Natural killer cell (primary cell): ENCODE measurements at regions of chr22 and their contacts with region 1.

Region 1: GRCh38 chr22:48098243-48098920 is 1335.9 kb downstream of the TBC1D22A start:
- DNase-seq: peak in 1 of 2 donors; percentile 78
- ATAC-seq: peak; percentile 90 to 96 (median 92)
- H3K4me3 ChIP-seq: peak overlapping the region; percentile 6
- H3K4me3 Mint-ChIP-seq: peak overlapping the region; percentile 87
- H3K27ac ChIP-seq: peak overlapping the region; percentile 87
- H3K27ac Mint-ChIP-seq: peak overlapping the region; percentile 91
- H3K4me1 ChIP-seq: peaks cover 47% of the 10 kb centered on the region
- H3K4me1 Mint-ChIP-seq: peaks cover 46 to 68% of the 10 kb centered on the region in 2 donors
- H3K27me3 ChIP-seq: no peaks in the 10 kb centered on the region
- H3K27me3 Mint-ChIP-seq: peaks cover 6 to 9% of the 10 kb centered on the region in 2 donors
- CTCF ChIP-seq: no peak

Region 2: GRCh38 chr22:48045369-48045768 is 53.0 kb before region 1 on chr22:
- intact Hi-C with region 1: no loop called
- DNase-seq: no peak
- ATAC-seq: peak in 1 of 3 donors; percentile 66
- H3K4me3 ChIP-seq: no peak overlapping the region
- H3K4me3 Mint-ChIP-seq: no peak overlapping the region
- H3K27ac ChIP-seq: no peak overlapping the region
- H3K27ac Mint-ChIP-seq: no peak overlapping the region
- H3K4me1 ChIP-seq: peaks cover 17% of the 10 kb centered on the region
- H3K4me1 Mint-ChIP-seq: peaks cover 0 to 10% of the 10 kb centered on the region in 2 donors
- H3K27me3 ChIP-seq: peaks cover 7% of the 10 kb centered on the region
- H3K27me3 Mint-ChIP-seq: peaks cover 21 to 34% of the 10 kb centered on the region in 2 donors
- CTCF ChIP-seq: no peak

Region 3: GRCh38 chr22:48188231-48188721 is 89.9 kb after region 1 on chr22:
- intact Hi-C with region 1: loop called (anchors 5 kb)
- DNase-seq: peak; percentile 48 to 62
- ATAC-seq: peak; percentile 57 to 74 (median 64)
- H3K4me3 ChIP-seq: no peak overlapping the region
- H3K4me3 Mint-ChIP-seq: no peak overlapping the region
- H3K27ac ChIP-seq: no peak overlapping the region
- H3K27ac Mint-ChIP-seq: peak overlapping the region in 1 of 2 donors; percentile 50
- H3K4me1 ChIP-seq: peaks cover 29% of the 10 kb centered on the region
- H3K4me1 Mint-ChIP-seq: peaks cover 43 to 48% of the 10 kb centered on the region in 2 donors
- H3K27me3 ChIP-seq: no peaks in the 10 kb centered on the region
- H3K27me3 Mint-ChIP-seq: peaks cover 29 to 40% of the 10 kb centered on the region in 2 donors
- CTCF ChIP-seq: no peak

Region 4: DNA sequence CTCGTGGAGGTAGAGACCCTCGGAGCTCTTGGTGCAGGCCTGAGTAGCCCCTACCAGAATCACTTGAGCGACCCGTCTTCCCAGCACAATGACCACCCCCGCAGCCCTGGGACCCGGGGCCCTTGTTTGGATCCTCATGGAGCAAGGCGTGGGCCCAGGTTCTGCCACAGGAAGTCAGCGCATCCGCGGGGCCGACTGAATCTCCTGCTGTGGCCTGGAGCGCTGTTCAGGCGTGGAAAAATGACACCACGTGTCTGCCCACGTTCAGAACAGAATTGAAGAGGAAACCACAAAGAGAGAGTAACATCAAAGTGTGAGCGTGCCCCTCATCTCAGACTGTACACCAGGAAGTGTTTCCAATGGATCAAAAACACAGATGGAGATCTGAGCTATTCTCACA is 143.3 kb after region 1 on chr22:
- intact Hi-C with region 1: loop called (anchors 5 kb)
- DNase-seq: peak in 1 of 2 donors; percentile 37
- ATAC-seq: peak; percentile 7 to 60 (median 52)
- H3K4me3 ChIP-seq: no peak overlapping the region
- H3K4me3 Mint-ChIP-seq: peak overlapping the region; percentile 52
- H3K27ac ChIP-seq: no peak overlapping the region
- H3K27ac Mint-ChIP-seq: no peak overlapping the region
- H3K4me1 ChIP-seq: peaks cover 79% of the 10 kb centered on the region
- H3K4me1 Mint-ChIP-seq: peaks cover 69 to 72% of the 10 kb centered on the region in 2 donors
- H3K27me3 ChIP-seq: peaks cover 13% of the 10 kb centered on the region
- H3K27me3 Mint-ChIP-seq: peaks cover 25 to 38% of the 10 kb centered on the region in 2 donors
- CTCF ChIP-seq: no peak